ENCODE measurements at regions of chr15 and their contacts with region 1.

Region 1: DNA sequence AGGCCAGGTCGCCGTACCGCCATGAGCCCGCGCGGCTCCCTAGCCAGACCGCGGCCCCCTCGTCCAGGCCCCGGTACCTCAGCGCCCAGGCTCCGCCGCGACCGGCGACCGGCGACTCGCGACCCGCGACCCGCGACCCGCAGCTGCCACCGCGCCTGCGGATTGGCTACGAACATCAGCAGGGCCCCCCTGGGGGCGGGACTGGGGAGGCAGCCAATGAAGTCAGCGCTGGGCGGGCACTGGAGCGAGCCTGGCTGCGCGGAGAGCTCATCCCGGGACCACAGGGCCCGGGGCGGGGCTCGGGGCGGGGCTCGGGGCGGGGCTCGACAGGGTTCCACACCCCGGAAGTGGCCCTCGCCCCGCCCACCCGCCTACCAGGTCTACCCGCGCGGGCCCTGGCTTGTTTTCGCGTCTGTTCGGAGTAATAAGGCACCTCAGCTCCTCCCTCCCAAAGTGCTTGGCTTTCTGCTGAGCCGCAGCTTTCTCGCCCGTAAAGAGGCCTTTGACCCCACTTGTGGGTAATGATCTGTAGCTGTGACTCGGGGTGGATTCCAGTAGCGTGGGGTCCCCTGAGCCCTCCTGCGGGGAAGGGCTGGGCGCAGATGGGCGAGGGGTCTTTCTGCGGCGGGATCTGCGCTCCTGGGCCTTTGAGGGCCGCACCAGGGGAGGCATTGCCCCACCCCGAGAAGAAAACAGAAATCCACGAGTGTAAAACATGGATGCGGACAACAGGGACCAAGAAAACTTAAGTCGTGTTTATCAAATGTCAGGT is at the start of gene LYSMD4:
- DNase-seq: peak; percentile 94 to 96
- ATAC-seq: peak; percentile 96 to 99
- H3K4me3 ChIP-seq: peak within 1 kb of the TSS; percentile 61
- H3K27ac ChIP-seq: peak within 1 kb of the TSS; percentile 85 to 90
- H3K4me1 ChIP-seq: peaks cover 10% of the 10 kb centered on the region; the same call in 1 of the 3 replicates
- CTCF ChIP-seq: no peak
- EP300 ChIP-seq: no peak
- POLR2A ChIP-seq: peak; percentile 69
- RAD21 ChIP-seq: no peak
- polyA plus RNA-seq, gene LYSMD4: 3.8 TPM in 2 replicates

Region 2: GRCh38 chr15:99250494-99251435 is 482.7 kb before region 1 on chr15:
- CTCF ChIA-PET with region 1: no interaction called
- POLR2A ChIA-PET with region 1: interaction called, 11 read pairs
- DNase-seq: peak; percentile 92 to 99
- ATAC-seq: peak; percentile 91 to 96
- H3K4me3 ChIP-seq: peak overlapping the region; percentile 76
- H3K27ac ChIP-seq: peak overlapping the region; percentile 91
- H3K4me1 ChIP-seq: peaks cover 15% of the 10 kb centered on the region; the same call in 2 of the 3 replicates
- CTCF ChIP-seq: no peak
- EP300 ChIP-seq: no peak
- POLR2A ChIP-seq: peak; percentile 62
- RAD21 ChIP-seq: no peak

Region 3: GRCh38 chr15:99712415-99712814 is 21.0 kb before region 1 on chr15:
- CTCF ChIA-PET with region 1: interaction called, 13 read pairs
- POLR2A ChIA-PET with region 1: interaction called, 10 read pairs
- DNase-seq: no peak
- ATAC-seq: no peak
- H3K4me3 ChIP-seq: no peak overlapping the region
- H3K27ac ChIP-seq: no peak overlapping the region
- H3K4me1 ChIP-seq: peaks cover 15% of the 10 kb centered on the region; the same call in 2 of the 3 replicates
- CTCF ChIP-seq: no peak
- EP300 ChIP-seq: no peak
- POLR2A ChIP-seq: no peak
- RAD21 ChIP-seq: no peak

Region 4: GRCh38 chr15:99719096-99719541 is 14.3 kb before region 1 on chr15:
- CTCF ChIA-PET with region 1: interaction called, 13 read pairs
- POLR2A ChIA-PET with region 1: interaction called, 10 read pairs
- DNase-seq: no peak
- ATAC-seq: no peak
- H3K4me3 ChIP-seq: no peak overlapping the region
- H3K27ac ChIP-seq: no peak overlapping the region
- H3K4me1 ChIP-seq: no peaks in the 10 kb centered on the region
- CTCF ChIP-seq: no peak
- EP300 ChIP-seq: no peak
- POLR2A ChIP-seq: no peak
- RAD21 ChIP-seq: no peak

Region 5: DNA sequence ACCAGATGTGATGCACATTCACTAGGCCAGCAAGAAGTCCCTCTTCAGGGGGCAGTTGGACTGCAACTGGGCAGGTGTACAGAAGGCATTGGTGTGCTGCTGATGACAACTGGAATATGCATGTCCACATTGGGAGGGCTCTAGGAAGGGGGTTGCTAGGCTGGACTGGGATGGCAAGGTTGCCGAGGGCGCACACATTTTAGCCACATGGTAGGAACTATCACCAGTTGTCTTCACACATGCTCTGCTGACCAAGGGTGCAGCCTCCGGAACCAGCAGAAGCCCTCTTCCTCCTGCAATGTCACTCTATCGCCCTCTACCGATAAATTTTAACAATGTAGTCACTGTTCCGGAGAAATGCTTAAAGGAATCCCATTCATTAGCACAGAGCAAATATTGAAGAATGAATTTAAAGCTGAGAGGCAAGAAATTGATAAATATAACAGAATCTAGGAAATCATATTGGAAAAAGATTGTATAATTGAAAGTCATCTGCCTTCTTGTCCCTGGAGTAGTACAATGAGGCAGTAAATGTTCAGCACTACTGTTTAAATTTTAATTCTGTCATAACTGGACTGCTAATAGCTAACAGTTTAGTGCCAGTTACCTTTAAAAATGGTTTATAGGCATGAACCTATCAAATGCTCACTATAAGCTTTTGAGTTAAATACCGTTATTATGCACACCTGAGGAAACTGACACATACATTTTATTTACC is 22.4 kb after region 1 on chr15:
- CTCF ChIA-PET with region 1: interaction called, 16 read pairs
- POLR2A ChIA-PET with region 1: interaction called, 5 read pairs
- DNase-seq: peak; percentile 71 to 84
- ATAC-seq: peak; percentile 85 to 96
- H3K4me3 ChIP-seq: no peak overlapping the region
- H3K27ac ChIP-seq: no peak overlapping the region
- H3K4me1 ChIP-seq: no peaks in the 10 kb centered on the region
- CTCF ChIP-seq: peak; percentile 90
- EP300 ChIP-seq: no peak
- POLR2A ChIP-seq: no peak
- RAD21 ChIP-seq: peak; percentile 89 to 94

Measured in A549 (cell line).